ENCODE measurements at regions of chr7 and their contacts with region 1.

Region 1: DNA sequence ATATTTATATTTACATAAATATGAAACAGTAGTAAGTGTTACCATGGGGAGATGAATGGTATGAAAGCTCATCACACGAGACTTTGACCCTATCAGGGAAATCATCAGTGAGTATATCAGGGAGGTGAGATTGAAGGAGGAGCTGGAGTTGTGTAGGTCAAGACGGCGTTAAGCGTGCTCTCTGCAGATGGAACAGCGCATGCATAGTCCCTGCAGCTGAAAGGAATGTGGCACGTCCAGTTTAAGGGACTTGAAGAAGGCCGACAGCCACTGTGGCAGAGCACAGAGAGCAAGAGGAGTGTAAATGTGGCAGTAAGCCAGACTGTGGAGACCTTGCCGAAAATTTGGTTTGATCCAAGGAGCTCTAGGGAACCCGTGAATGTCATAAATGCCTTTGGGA is 38.9 kb downstream of the POU6F2 start:
- DNase-seq: peak; percentile 87
- H3K4me3 Mint-ChIP-seq: peak overlapping the region; percentile 61
- H3K27ac Mint-ChIP-seq: peak overlapping the region; percentile 61
- H3K4me1 Mint-ChIP-seq: peaks cover 25% of the 10 kb centered on the region
- H3K27me3 Mint-ChIP-seq: no peaks in the 10 kb centered on the region
- CTCF ChIP-seq: no peak

Region 2: DNA sequence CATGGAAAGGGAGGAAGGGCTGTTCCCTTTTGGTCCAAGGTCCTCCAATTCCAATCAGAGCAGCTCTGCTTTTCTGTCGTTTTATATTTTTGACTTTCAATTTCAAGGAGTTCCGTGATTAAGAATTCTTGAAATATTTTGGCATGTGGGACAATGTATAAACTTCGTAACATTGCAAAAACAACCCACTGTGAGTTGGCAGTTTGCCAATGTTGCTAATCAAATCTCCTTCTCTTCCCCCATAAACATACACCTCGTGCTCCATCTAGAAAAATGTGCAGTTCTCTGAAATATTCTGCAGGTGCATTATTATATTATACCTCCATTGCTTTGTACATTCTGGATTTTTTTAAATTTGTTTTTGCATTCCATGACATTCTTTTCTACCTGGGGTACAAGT is 10.9 kb after region 1 on chr7:
- CTCF ChIA-PET with region 1: no interaction called
- intact Hi-C with region 1: loop called (anchors 2 kb)
- DNase-seq: no peak
- H3K4me3 Mint-ChIP-seq: no peak overlapping the region
- H3K27ac Mint-ChIP-seq: no peak overlapping the region
- H3K4me1 Mint-ChIP-seq: peaks cover 14% of the 10 kb centered on the region
- H3K27me3 Mint-ChIP-seq: no peaks in the 10 kb centered on the region
- CTCF ChIP-seq: no peak

Region 3: DNA sequence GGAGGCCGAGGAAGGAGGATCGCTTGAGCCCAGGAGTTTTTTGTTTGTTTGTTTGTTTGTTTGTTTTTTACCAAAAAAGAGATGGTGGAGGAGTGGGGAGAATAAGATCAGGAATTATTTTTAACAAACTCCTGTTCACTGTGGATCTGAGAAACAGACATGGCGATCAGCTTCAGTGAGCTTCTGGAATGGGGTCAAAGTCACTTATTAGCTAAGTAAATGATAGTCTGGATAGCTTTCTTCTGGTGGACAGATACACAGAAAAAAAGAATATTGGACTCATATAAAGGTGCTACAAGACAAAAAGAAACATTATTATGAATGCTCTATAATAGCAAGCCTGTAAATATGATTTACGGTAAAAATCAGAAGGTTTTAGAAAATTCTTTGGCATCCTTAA is 46.2 kb after region 1 on chr7:
- CTCF ChIA-PET with region 1: no interaction called
- intact Hi-C with region 1: loop called (anchors 2 kb)
- DNase-seq: no peak
- H3K4me3 Mint-ChIP-seq: no peak overlapping the region
- H3K27ac Mint-ChIP-seq: no peak overlapping the region
- H3K4me1 Mint-ChIP-seq: no peaks in the 10 kb centered on the region
- H3K27me3 Mint-ChIP-seq: no peaks in the 10 kb centered on the region
- CTCF ChIP-seq: no peak

Region 4: DNA sequence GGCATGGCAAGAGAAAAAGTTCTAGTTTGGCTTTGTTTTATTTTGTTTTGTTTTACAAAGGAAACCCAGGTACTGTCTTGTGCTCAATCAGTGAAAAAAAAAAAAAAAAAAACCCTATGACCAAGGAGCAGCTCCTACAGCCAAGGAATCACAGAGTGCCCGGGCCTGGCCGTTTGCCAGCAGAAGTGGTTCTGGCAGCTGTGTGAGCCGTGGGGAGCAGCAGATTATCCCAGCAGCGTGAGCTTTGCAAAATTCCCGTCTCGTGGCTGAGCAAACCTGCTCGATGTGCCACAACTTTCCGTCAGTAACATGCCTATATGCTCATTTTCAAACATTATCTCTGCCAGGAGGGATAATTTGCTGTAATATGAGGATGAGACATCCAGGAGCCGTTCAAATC is 254.8 kb after region 1 on chr7:
- CTCF ChIA-PET with region 1: no interaction called
- intact Hi-C with region 1: no loop called
- DNase-seq: peak; percentile 39
- H3K4me3 Mint-ChIP-seq: no peak overlapping the region
- H3K27ac Mint-ChIP-seq: no peak overlapping the region
- H3K4me1 Mint-ChIP-seq: no peaks in the 10 kb centered on the region
- H3K27me3 Mint-ChIP-seq: no peaks in the 10 kb centered on the region
- CTCF ChIP-seq: no peak

Measured in Calu3 (cell line).